Posterior vena cava (tissue), 2 donors: ENCODE measurements at regions of chr5 and their contacts with region 1.

Region 1: DNA sequence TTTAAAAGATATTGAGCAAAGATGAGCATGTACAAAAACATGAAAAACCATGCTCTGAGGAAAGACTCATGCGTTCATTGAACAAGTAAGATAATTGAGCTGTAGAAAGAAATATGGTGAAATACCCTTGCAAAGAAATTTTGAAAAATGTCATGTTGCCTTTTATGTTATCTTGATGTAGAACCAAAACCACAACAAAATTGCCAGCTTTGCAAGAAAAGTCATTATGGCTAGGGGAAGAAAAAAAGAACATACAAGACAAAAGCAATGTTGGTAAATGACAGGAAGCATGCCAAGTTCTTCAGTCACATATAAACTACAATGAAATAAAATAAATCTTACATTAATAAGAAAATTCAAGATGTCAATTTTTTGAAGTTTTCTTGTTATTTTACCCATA is 368.0 kb downstream of the IRX1 start:
- DNase-seq: no peak

Region 2: DNA sequence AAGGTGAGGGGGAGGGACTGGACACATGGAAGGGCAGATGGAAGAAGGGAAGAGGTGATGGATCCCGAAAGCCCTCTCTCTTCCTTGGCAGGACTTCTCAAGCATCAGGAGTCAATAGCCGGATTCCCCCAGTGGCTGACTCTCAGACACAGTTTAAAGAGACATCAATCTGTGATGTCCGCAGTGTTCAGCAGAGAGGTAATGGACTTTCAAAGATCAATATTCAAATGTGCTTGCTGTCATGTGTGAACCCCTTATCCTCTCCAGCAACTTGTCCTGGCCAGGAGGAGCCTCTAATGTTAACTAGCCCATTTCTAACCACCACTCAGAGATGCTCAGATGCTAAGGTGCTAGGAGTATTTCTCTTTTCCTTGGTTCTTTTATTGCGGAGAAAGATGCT is 24.2 kb after region 1 on chr5:
- intact Hi-C with region 1: loop called in 1 of 2 experiments (anchors 2 kb)
- DNase-seq: no peak